Dorsolateral prefrontal cortex (tissue), 120 donors: ENCODE measurements at regions of chr1 and their contacts with region 1.

Region 1: GRCh38 chr1:33777337-33777736 is 86.5 kb upstream of the HMGB4 start:
- DNase-seq: no peak
- H3K4me3 ChIP-seq: no peak overlapping the region
- H3K27ac ChIP-seq: no peak overlapping the region
- H3K27me3 ChIP-seq: no peaks in the 10 kb centered on the region
- CTCF ChIP-seq: no peak

Region 2: DNA sequence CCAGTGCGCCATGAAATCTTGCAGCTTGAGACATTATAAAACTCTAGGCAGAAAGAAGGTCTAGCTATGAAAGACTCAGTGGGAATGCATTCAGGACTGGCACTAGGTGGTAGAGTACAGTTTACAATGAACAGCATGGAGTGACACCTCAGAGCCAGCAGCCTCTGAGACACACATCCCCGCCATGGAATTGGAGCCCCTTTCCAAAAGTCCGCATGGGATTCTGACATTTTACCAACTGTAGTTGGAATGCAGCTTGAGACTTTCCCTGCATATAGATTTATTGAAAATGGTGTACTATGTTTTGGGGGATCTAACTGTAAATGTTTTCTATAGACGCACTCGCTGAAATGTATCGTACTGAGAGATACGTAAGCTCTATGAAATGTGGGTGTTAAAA is 188.6 kb before region 1 on chr1:
- intact Hi-C with region 1: no loop called
- DNase-seq: no peak
- H3K4me3 ChIP-seq: no peak overlapping the region
- H3K27ac ChIP-seq: no peak overlapping the region
- H3K27me3 ChIP-seq: no peaks in the 10 kb centered on the region
- CTCF ChIP-seq: no peak

Region 3: DNA sequence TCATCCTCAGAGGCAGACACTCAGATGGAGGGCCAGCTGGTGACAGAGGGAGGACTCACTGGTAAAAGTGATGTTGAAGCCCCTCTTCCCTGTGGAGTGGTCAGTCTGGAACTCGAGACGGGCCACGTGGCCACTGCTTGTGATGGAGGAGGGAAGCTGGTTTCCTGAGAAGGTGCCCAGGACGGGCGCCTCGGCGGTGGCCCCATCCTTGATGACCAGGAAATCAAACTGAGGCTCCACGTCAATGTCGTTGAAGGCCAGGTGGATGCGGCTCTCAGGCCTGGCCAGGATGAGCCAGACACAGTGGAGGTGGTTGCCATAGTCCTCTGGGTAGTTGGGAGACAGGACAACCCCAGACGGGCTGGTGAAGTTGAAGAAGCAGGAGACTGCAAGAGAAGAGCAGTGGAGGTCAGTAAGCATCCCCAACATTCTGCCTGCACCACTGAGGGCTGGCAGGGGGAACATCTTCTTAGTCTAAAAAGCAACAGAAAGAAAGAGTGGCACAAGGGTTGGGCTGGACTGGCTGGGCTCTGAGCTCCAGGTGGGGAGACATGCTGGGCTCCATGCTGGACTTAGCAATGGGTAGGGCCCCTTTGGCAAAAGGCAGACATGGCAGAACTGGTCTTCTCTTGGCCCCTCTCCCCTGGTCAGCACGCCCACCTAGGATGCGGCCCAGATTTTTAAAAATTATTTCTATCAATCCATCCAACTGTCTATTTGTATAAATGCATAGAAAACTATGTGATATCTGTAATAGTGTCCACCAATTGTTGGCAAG is 33.9 kb before region 1 on chr1:
- intact Hi-C with region 1: no loop called
- DNase-seq: no peak
- H3K4me3 ChIP-seq: no peak overlapping the region
- H3K27ac ChIP-seq: no peak overlapping the region
- H3K27me3 ChIP-seq: no peaks in the 10 kb centered on the region
- CTCF ChIP-seq: no peak

Region 4: GRCh38 chr1:33876970-33877650 is 99.8 kb after region 1 on chr1:
- intact Hi-C with region 1: no loop called
- DNase-seq: peak in 9 of 10 donors; percentile 29 to 82 (median 65)
- H3K4me3 ChIP-seq: no peak overlapping the region
- H3K27ac ChIP-seq: no peak overlapping the region
- H3K27me3 ChIP-seq: no peaks in the 10 kb centered on the region
- CTCF ChIP-seq: no peak

Region 5: DNA sequence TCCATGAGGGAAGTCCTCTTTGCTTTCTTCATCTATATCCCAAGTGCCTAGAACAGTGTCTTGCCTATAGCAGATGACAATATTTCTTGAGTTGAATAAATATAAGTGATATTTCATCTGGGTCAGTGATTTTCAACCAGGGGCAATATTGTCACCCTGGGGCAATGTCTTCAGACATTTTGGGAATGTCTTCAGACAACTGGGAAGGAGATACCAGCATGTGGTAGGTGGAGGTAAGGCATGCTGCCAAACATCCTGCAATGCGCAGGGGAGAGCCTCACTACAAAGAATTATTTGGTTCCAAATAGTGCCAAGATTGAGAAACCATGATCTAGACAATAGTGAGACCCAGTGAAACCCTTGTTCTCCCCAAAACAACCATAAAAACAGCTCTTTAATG is 454.1 kb after region 1 on chr1:
- intact Hi-C with region 1: loop called in 1 of 2 experiments (anchors 10 kb)
- DNase-seq: no peak
- H3K4me3 ChIP-seq: no peak overlapping the region
- H3K27ac ChIP-seq: no peak overlapping the region
- H3K27me3 ChIP-seq: peaks cover 0 to 8% (median 0%) of the 10 kb centered on the region in 45 donors
- CTCF ChIP-seq: no peak